Aorta (tissue), 5 donors: ENCODE measurements at regions of chr5 and their contacts with region 1.

Region 1: DNA sequence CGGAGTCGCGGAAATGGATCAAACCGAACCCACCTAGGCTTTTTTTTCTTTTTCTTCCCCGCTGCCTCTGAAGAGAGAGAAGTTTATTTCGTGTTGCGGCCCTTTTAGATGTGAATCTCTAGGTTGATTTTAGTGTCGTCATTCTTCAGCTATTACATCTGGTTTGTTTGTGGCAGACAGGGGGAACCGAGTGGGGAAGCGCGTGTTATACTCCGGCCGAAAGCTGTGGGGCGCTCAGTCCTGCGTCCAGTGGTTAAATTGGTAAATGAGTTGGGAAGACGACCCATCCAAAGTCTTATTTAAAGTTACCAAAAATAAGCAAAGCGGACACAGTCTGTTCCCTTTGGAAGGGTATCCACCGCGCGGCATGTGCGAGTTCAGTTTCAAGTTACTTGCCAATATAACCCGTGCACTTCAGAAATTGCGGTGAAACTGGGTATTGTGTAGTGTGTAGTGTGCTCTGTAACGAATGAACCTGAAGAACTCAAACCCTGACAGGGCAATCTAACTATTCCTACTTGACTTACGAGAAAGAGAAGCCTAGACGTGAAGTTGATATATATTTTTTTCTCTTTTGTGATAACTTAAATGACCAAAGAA is 1.3 kb downstream of the MAN2A1 start:
- DNase-seq: peak; percentile 85 to 90
- ATAC-seq: peak; percentile 81
- H3K4me3 ChIP-seq: peak overlapping the region; percentile 62 to 81
- H3K27ac ChIP-seq: peak overlapping the region; percentile 78 to 97
- H3K4me1 ChIP-seq: peaks cover 5% of the 10 kb centered on the region in 2 donors
- H3K27me3 ChIP-seq: no peaks in the 10 kb centered on the region

Region 2: GRCh38 chr5:109668668-109669422 is 22.2 kb before region 1 on chr5:
- intact Hi-C with region 1: no loop called
- DNase-seq: no peak
- ATAC-seq: no peak
- H3K4me3 ChIP-seq: no peak overlapping the region
- H3K27ac ChIP-seq: no peak overlapping the region
- H3K4me1 ChIP-seq: no peaks in the 10 kb centered on the region
- H3K27me3 ChIP-seq: no peaks in the 10 kb centered on the region

Region 3: DNA sequence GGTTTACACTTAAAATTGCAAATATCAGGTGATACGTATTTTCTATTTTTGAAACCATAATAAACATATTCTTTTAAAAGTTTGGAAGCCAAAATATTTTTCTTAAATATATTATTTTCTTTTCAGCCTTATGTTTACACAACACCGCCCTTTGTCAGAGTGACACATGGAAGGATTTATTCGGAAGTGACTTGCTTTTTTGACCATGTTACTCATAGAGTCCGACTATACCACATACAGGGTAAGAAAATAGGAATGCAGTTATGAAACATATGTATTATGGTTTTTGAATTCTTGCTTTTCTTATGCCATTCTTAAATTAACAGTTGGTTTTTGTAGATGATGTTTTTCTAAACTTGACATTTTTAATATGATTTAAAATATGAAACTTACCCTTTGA is 132.5 kb after region 1 on chr5:
- intact Hi-C with region 1: loop called in 1 of 2 experiments (anchors 10 kb)
- DNase-seq: no peak
- ATAC-seq: no peak
- H3K4me3 ChIP-seq: no peak overlapping the region
- H3K27ac ChIP-seq: no peak overlapping the region
- H3K4me1 ChIP-seq: no peaks in the 10 kb centered on the region
- H3K27me3 ChIP-seq: no peaks in the 10 kb centered on the region

Region 4: DNA sequence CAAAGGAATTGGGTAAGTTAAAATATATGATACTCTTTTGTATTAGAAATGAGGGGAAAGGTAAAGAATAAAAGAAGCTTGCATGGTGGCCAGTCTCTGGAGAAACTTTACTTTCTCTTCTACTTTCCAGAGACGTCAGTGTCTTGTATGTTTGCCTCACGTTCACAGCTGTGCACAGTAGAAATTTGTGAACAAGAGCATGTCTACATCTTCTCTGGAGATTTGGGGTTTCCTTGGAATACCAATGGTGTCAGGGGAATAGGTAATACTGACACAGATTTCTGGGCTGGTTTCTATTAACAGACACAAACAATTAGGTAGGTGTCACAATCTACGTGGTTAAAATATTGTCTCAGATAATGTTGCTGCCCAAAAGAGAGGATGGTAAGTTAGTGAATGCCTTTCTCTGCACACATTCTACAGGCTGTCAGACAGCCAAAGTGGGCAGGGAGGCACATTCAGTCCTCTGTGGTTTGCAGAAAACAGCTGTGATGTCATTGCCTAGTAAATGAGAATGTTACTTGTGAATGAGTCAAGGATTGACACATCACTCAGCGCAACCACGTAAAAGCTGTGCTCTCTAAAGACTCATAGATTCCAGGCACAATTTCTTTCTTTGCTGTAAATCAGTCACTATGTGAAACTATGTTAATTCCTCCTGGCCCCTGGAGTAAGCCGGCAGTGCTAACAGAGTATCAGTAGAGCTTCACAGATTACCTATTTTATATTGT is 395.7 kb after region 1 on chr5:
- intact Hi-C with region 1: loop called in 1 of 2 experiments (anchors 10 kb)
- DNase-seq: peak; percentile 36 to 78
- ATAC-seq: peak; percentile 61
- H3K4me3 ChIP-seq: no peak overlapping the region
- H3K27ac ChIP-seq: peak overlapping the region in 1 of 2 donors; percentile 75
- H3K4me1 ChIP-seq: peaks cover 0 to 6% of the 10 kb centered on the region in 2 donors
- H3K27me3 ChIP-seq: no peaks in the 10 kb centered on the region

Region 5: GRCh38 chr5:110414360-110414759 is 723.3 kb after region 1 on chr5:
- intact Hi-C with region 1: loop called in 1 of 2 experiments (anchors 5 kb)
- DNase-seq: no peak
- ATAC-seq: no peak
- H3K4me3 ChIP-seq: no peak overlapping the region
- H3K27ac ChIP-seq: no peak overlapping the region
- H3K4me1 ChIP-seq: no peaks in the 10 kb centered on the region
- H3K27me3 ChIP-seq: no peaks in the 10 kb centered on the region